ENCODE measurements at regions of chr18 and their contacts with region 1.

Region 1: DNA sequence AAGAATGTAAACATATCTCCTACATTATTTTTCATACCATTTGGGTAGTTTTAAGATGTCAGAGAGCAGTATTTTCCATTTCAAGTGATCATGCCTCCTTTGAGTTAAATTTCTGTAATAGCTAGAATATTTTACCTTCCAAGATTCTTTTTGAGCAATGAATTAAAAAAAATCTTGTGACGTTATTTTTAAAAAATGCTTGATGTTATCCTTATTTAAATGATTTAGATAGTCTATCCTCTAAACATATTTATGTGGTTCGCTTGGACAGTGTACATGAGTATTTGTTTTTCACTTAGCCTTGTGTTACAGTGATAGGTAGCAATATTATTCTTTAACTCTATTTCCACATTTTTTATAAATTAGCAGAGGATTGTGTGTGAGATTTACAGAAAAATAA is 639.2 kb upstream of the CDH2 start:
- DNase-seq: no peak
- H3K4me3 Mint-ChIP-seq: no peak overlapping the region
- H3K27ac Mint-ChIP-seq: no peak overlapping the region
- H3K4me1 Mint-ChIP-seq: no peaks in the 10 kb centered on the region
- H3K27me3 Mint-ChIP-seq: no peaks in the 10 kb centered on the region

Region 2: DNA sequence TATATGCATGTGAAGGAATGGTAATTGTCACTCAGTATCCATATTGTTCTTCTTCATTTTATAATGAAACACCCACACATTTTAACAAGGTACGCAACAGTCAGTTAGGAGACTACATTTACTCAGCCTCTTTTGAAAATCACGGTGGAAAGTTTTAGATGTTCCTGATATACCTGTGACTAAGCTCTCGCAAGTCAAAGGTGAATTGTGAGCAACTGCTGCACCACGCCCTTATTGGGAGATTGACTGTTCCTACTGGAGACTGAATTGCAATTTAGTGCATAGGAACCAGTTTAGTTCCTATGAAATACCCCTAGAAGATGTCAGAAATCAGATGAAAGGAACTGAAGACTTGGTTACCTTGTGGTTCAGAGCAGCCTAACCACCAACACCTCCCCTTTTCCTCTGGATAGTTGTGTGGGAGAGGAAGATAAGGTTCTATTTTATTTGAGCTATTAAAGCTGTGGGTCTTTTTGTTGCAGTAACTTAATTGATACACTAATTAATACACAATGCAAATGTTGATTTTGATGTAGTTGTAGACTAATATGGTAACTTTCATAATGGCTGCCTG is 641.2 kb after region 1 on chr18:
- intact Hi-C with region 1: loop called (anchors 5 kb)
- DNase-seq: no peak
- H3K4me3 Mint-ChIP-seq: no peak overlapping the region
- H3K27ac Mint-ChIP-seq: no peak overlapping the region
- H3K4me1 Mint-ChIP-seq: no peaks in the 10 kb centered on the region
- H3K27me3 Mint-ChIP-seq: no peaks in the 10 kb centered on the region

Measured in activated T-helper 1 cell treated with anti-CD3 and anti-CD28 coated beads, Interleukin-12 subunit alpha, Interleukin-12 subunit beta, Interleukin-2, Interleukin-4 antibody, amounts not matched to agents 30 ng/mL and 10 ng/mL and 1 ng/mL, durations not matched to agents 14 hours and 24 hours and 36 hours (primary cell).